Ascending aorta (tissue), 2 donors: ENCODE measurements at regions of chr18 and their contacts with region 1.

Region 1: GRCh38 chr18:68148863-68149262 is 566.0 kb downstream of the TMX3 start:
- DNase-seq: no peak
- H3K4me3 ChIP-seq: no peak overlapping the region
- H3K27ac ChIP-seq: no peak overlapping the region
- H3K4me1 ChIP-seq: no peaks in the 10 kb centered on the region
- H3K27me3 ChIP-seq: no peaks in the 10 kb centered on the region
- CTCF ChIP-seq: no peak

Region 2: DNA sequence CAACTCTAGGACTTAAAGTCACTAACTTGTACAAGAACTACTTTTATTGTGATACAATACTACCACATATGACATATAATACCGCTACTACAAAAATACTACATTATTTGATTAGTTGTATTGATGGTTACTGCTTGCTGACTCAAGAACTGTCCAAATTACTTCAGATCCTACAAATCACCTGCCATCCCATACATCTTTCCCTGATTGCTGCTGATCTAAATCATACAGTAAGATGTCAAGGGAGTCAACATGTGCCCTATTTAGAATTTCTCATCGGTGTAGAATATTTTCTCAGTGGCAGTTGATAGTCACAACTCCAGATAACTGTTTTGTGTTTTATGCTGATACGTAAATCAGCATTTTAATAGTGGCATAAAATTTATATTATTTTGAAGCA is 471.4 kb before region 1 on chr18:
- intact Hi-C with region 1: loop called (anchors 5 kb)
- DNase-seq: no peak
- H3K4me3 ChIP-seq: no peak overlapping the region
- H3K27ac ChIP-seq: no peak overlapping the region
- H3K4me1 ChIP-seq: no peaks in the 10 kb centered on the region
- H3K27me3 ChIP-seq: no peaks in the 10 kb centered on the region
- CTCF ChIP-seq: no peak

Region 3: DNA sequence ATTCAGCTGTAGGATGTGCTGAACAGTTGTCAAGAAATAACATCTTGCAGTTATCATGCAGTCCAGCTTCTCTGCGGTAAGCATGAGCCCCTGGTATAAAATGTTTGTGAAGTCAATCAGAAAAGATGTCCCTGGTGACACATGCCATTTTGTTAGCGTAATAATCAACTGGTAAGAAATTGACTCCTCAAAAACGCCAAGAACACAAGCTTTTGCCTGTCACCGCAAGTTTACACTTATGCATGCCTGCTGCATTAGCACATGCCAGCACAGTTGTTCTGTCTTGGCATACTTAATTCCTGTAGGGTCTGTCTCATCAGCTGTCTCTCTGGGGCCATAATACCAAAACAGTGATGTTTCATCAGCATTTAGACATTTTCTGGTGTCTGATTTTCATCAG is 107.5 kb before region 1 on chr18:
- intact Hi-C with region 1: no loop called
- DNase-seq: no peak
- H3K4me3 ChIP-seq: no peak overlapping the region
- H3K27ac ChIP-seq: no peak overlapping the region
- H3K4me1 ChIP-seq: no peaks in the 10 kb centered on the region
- H3K27me3 ChIP-seq: no peaks in the 10 kb centered on the region
- CTCF ChIP-seq: no peak

Region 4: GRCh38 chr18:68262690-68263294 is 113.9 kb after region 1 on chr18:
- intact Hi-C with region 1: no loop called
- DNase-seq: no peak
- H3K4me3 ChIP-seq: no peak overlapping the region
- H3K27ac ChIP-seq: no peak overlapping the region
- H3K4me1 ChIP-seq: no peaks in the 10 kb centered on the region
- H3K27me3 ChIP-seq: no peaks in the 10 kb centered on the region
- CTCF ChIP-seq: no peak